CD4-positive, alpha-beta T cell (primary cell): ENCODE measurements at regions of chr19 and their contacts with region 1.

Region 1: GRCh38 chr19:31214086-31214485 is 135.2 kb downstream of the TSHZ3 start:
- DNase-seq: peak; percentile 63 to 95 (median 79)
- ATAC-seq: peak; percentile 94
- H3K4me3 ChIP-seq: no peak overlapping the region
- H3K4me3 Mint-ChIP-seq: peak overlapping the region; percentile 54
- H3K27ac ChIP-seq: peak overlapping the region in 1 of 2 donors; percentile 42
- H3K27ac Mint-ChIP-seq: peak overlapping the region; percentile 83
- H3K4me1 ChIP-seq: peaks cover 16% of the 10 kb centered on the region
- H3K4me1 Mint-ChIP-seq: peaks cover 26% of the 10 kb centered on the region
- H3K27me3 ChIP-seq: no peaks in the 10 kb centered on the region
- H3K27me3 Mint-ChIP-seq: no peaks in the 10 kb centered on the region
- CTCF ChIP-seq: no peak

Region 2: GRCh38 chr19:30842926-30843325 is 371.2 kb before region 1 on chr19:
- CTCF ChIA-PET with region 1: no interaction called
- POLR2A ChIA-PET with region 1: no interaction called
- intact Hi-C with region 1: no loop called
- DNase-seq: no peak
- ATAC-seq: no peak
- H3K4me3 ChIP-seq: no peak overlapping the region
- H3K4me3 Mint-ChIP-seq: no peak overlapping the region
- H3K27ac ChIP-seq: no peak overlapping the region
- H3K27ac Mint-ChIP-seq: no peak overlapping the region
- H3K4me1 ChIP-seq: no peaks in the 10 kb centered on the region
- H3K4me1 Mint-ChIP-seq: no peaks in the 10 kb centered on the region
- H3K27me3 ChIP-seq: no peaks in the 10 kb centered on the region
- H3K27me3 Mint-ChIP-seq: peaks cover 3% of the 10 kb centered on the region
- CTCF ChIP-seq: no peak

Region 3: GRCh38 chr19:31127134-31127967 is 86.7 kb before region 1 on chr19:
- CTCF ChIA-PET with region 1: no interaction called
- POLR2A ChIA-PET with region 1: no interaction called
- intact Hi-C with region 1: no loop called
- DNase-seq: no peak
- ATAC-seq: no peak
- H3K4me3 ChIP-seq: no peak overlapping the region
- H3K4me3 Mint-ChIP-seq: no peak overlapping the region
- H3K27ac ChIP-seq: no peak overlapping the region
- H3K27ac Mint-ChIP-seq: no peak overlapping the region
- H3K4me1 ChIP-seq: no peaks in the 10 kb centered on the region
- H3K4me1 Mint-ChIP-seq: no peaks in the 10 kb centered on the region
- H3K27me3 ChIP-seq: no peaks in the 10 kb centered on the region
- H3K27me3 Mint-ChIP-seq: peaks cover 5% of the 10 kb centered on the region
- CTCF ChIP-seq: no peak

Region 4: DNA sequence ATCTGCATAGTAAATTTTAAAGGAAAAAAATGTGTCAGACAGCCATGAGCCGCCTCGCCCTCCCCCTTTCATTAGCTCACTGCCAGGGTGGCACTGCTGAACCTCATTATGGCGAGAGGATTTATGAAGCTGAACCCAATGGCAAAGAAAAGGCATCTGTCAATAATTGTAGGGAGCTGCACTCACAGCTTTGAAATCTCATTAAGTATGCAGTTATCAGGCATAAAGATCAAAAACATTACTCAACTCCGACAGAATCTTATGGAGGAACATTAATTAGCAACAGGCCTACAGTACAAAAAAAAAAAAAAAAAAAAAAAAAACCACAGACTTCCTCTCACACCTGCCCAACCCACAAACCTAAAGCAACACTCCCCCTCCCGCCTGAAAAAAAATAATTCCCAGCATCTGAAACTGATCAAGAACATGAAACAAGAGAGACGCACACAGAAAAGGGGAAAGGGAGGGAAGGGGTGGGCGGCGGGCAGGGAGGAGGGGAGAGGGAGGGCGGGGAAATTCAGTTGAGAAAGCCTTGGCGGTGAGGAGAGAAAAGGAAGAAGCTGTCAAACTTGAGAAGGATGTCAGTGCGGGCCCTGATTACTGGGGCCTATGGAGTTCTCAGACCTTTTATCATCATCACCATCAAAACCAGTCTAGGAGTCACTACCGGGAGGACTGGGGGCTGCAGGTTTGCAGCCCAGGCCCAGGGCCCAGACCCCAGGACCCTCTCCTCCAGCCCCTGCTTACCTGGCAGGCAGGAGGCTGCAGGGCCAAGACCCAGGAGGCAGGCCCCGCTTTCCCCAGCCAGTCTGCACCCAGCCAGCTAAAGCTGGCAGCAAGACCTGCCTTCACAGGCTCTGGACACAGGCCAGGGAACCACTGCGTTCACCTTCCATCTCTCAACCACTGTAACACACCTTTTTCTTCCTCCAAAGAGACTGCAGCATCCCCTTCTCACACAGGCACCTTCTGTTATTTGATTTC is 126.2 kb after region 1 on chr19:
- CTCF ChIA-PET with region 1: no interaction called
- POLR2A ChIA-PET with region 1: interaction called, 3 read pairs
- intact Hi-C with region 1: loop called (anchors 2 to 5 kb)
- DNase-seq: peak in 6 of 14 experiments; percentile 8 to 81 (median 58)
- ATAC-seq: peak; percentile 77
- H3K4me3 ChIP-seq: no peak overlapping the region
- H3K4me3 Mint-ChIP-seq: peak overlapping the region; percentile 74
- H3K27ac ChIP-seq: no peak overlapping the region
- H3K27ac Mint-ChIP-seq: peak overlapping the region; percentile 69
- H3K4me1 ChIP-seq: peaks cover 26% of the 10 kb centered on the region
- H3K4me1 Mint-ChIP-seq: peaks cover 39% of the 10 kb centered on the region
- H3K27me3 ChIP-seq: peaks cover 11 to 12% of the 10 kb centered on the region in 2 experiments
- H3K27me3 Mint-ChIP-seq: peaks cover 17% of the 10 kb centered on the region
- CTCF ChIP-seq: no peak

Region 5: DNA sequence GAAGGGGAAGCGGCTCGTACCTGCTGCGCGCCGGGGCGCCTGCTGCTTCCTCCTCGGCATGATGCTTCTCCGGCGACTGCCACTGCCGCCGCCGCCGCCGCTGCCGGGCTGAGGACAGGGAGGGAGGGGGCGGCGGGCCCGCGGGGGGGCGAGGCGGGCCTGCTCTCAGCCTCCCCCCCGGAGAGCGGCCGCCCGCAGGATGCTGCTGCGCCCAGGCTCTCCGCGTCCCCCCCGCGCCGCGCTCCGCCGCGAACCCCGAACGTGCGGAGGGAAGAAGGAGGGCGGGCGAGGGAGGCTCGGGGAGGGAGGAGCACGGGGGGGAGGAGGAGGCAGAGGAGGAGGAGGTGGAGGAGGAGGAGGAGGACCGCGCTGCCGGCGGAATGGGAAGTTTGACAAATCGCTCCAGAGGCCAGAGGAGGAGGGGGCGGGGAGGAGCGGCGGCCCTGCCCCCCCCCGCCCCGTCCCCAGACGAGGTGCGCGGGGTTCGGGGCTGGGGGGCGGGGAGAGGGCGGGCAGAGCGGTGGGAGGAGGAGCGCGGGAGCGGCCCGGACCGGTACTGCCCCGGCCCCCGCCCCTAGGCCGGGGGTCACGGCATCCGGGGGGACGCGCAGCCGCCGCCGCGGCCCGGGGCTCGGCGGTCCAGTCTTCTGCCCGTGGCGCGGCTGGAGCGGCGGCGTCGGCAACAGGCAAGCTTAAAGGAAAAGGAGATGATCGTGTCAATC is 135.2 kb after region 1 on chr19 and contains the start of gene TSHZ3:
- CTCF ChIA-PET with region 1: no interaction called
- POLR2A ChIA-PET with region 1: interaction called, 3 read pairs
- intact Hi-C with region 1: loop called in 1 of 2 experiments (anchors 5 kb)
- DNase-seq: peak in 9 of 14 experiments; percentile 13 to 72 (median 43)
- ATAC-seq: peak; percentile 50
- H3K4me3 ChIP-seq: peak within 1 kb of the TSS; percentile 63
- H3K4me3 Mint-ChIP-seq: peak within 1 kb of the TSS; percentile 90
- H3K27ac ChIP-seq: no peak within 1 kb of the TSS
- H3K27ac Mint-ChIP-seq: no peak within 1 kb of the TSS
- H3K4me1 ChIP-seq: peaks cover 50% of the 10 kb centered on the region
- H3K4me1 Mint-ChIP-seq: peaks cover 41% of the 10 kb centered on the region
- H3K27me3 ChIP-seq: peaks cover 67 to 82% of the 10 kb centered on the region in 2 experiments
- H3K27me3 Mint-ChIP-seq: peaks cover 74% of the 10 kb centered on the region
- CTCF ChIP-seq: no peak
- total RNA-seq, gene TSHZ3: 0.38 to 0.61 TPM